K562 (cell line): ENCODE measurements at regions of chr17 and their contacts with region 1.

Region 1: GRCh38 chr17:75205037-75205792 is at the start of gene NUP85:
- DNase-seq: peak; percentile 96 to 100 (median 98)
- ATAC-seq: peak; percentile 87
- H3K4me3 ChIP-seq: peak within 1 kb of the TSS; percentile 67
- H3K27ac ChIP-seq: peak within 1 kb of the TSS; percentile 99
- H3K4me1 ChIP-seq: peaks cover 0 to 12% of the 10 kb centered on the region in 2 experiments; a peak in 3 of 5 replicates
- H3K27me3 ChIP-seq: no peaks in the 10 kb centered on the region
- CTCF ChIP-seq: no peak
- EP300 ChIP-seq: no peak; the same call in 1 of the 2 replicates
- POLR2A ChIP-seq: peak; percentile 94
- RAD21 ChIP-seq: peak in 1 of 2 experiments; percentile 21; a peak in 3 of 4 replicates
- polyA plus RNA-seq, gene NUP85: 156 to 177 TPM

Region 2: GRCh38 chr17:75131280-75132017 is 73.8 kb before region 1 on chr17 and contains the start of gene NT5C:
- CTCF ChIA-PET with region 1: interaction called, 7 read pairs
- POLR2A ChIA-PET with region 1: interaction called, 4 read pairs
- in situ Hi-C with region 1: no loop called
- intact Hi-C with region 1: loop called (anchors 1 kb)
- DNase-seq: peak; percentile 86 to 92 (median 88)
- ATAC-seq: peak; percentile 90
- H3K4me3 ChIP-seq: peak within 1 kb of the TSS; percentile 90
- H3K27ac ChIP-seq: peak within 1 kb of the TSS; percentile 90
- H3K4me1 ChIP-seq: peaks cover 12 to 36% of the 10 kb centered on the region in 2 experiments; a peak in 4 of 5 replicates
- H3K27me3 ChIP-seq: no peaks in the 10 kb centered on the region
- CTCF ChIP-seq: peak; percentile 75 to 86 (median 77)
- EP300 ChIP-seq: no peak
- POLR2A ChIP-seq: peak; percentile 83
- RAD21 ChIP-seq: peak; percentile 70 to 72
- polyA plus RNA-seq, gene NT5C: 2.9 to 5.0 TPM

Region 3: GRCh38 chr17:75173526-75173925 is 31.7 kb before region 1 on chr17:
- CTCF ChIA-PET with region 1: interaction called, 6 read pairs
- POLR2A ChIA-PET with region 1: interaction called, 7 read pairs
- in situ Hi-C with region 1: no loop called
- intact Hi-C with region 1: loop called (anchors 1 kb)
- DNase-seq: no peak
- ATAC-seq: no peak
- H3K4me3 ChIP-seq: no peak overlapping the region
- H3K27ac ChIP-seq: no peak overlapping the region
- H3K4me1 ChIP-seq: no peaks in the 10 kb centered on the region; a peak in 1 of 5 replicates
- H3K27me3 ChIP-seq: no peaks in the 10 kb centered on the region
- CTCF ChIP-seq: no peak
- EP300 ChIP-seq: no peak
- POLR2A ChIP-seq: no peak
- RAD21 ChIP-seq: no peak

Region 4: DNA sequence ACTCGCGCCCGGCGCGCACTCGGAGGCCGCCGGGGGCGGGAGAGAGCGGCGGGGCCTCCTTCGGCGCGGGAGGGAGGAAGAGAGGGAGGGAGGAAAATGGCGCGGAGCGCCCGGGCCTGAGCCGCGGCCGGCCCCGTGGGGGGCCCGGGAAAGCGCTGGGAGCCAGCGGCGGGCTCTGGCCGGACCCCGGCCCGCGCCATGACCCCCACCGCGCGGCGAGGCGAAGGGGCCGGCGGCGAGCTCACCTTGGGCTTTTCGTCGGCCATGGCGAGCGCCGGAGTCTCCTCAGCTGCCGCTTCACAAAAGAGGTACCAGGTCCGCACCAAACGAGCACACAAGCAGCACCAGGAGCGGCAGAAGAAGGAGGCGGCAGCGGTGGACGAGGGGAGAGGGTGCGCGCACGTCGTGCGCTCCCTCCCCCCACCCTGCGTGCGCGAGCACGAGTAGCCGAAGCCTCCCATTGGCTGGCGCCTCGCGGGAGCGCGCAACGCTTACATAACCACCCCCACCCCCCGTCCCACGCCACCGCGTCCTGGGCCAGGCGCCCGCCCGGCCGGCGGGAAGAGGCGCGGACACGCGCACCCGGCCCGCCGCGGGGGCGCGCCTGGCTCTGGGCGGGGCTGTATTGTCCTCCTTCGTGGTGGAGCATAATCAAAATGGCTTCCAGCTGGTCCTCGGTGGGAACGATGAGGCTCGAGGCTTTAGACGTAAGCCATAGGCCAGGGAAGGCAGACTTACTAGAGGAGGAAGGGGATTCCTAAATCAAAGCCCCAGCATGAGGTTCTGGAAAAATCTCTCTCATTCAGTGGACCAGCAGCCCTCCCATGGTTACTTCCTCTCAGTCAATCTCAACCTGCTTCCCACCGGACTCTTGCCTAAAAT is 22.4 kb before region 1 on chr17 and contains the start of gene SUMO2:
- CTCF ChIA-PET with region 1: no interaction called
- POLR2A ChIA-PET with region 1: interaction called, 10 read pairs
- in situ Hi-C with region 1: no loop called
- intact Hi-C with region 1: no loop called
- DNase-seq: peak; percentile 98 to 99 (median 99)
- ATAC-seq: peak; percentile 92
- H3K4me3 ChIP-seq: peak within 1 kb of the TSS; percentile 100
- H3K27ac ChIP-seq: peak within 1 kb of the TSS; percentile 100
- H3K4me1 ChIP-seq: peaks cover 18 to 26% of the 10 kb centered on the region in 2 experiments; a peak in 4 of 5 replicates
- H3K27me3 ChIP-seq: no peaks in the 10 kb centered on the region
- CTCF ChIP-seq: peak; percentile 34 to 38 (median 35); a peak in 2 of 6 replicates
- EP300 ChIP-seq: no peak
- POLR2A ChIP-seq: peak; percentile 82
- RAD21 ChIP-seq: no peak; a peak in 1 of 4 replicates
- polyA plus RNA-seq, gene SUMO2: 570 to 733 TPM

Region 5: DNA sequence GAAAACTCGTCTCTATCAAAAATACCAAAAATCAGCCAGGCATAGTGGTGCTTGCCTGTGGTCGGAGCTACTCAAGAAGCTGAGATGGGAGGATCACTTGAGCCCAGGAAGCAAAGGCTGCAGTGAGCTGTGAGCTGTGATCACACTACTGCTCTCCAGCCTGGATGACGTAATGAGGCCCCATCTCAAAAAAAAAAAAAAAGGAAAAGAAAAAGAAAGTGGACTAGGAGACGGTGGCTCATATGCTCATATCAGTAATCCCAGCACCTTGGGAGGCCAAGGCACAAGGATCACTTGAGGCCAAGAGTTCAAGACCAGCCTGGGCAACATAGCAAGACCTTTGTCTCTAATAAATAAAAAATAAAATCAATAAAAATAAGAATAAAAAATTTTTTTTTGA is 13.6 kb before region 1 on chr17:
- CTCF ChIA-PET with region 1: interaction called, 3 read pairs
- POLR2A ChIA-PET with region 1: interaction called, 27 read pairs
- in situ Hi-C with region 1: no loop called
- intact Hi-C with region 1: no loop called
- DNase-seq: peak in 2 of 4 experiments; percentile 16 to 60
- ATAC-seq: peak; percentile 76
- H3K4me3 ChIP-seq: no peak overlapping the region
- H3K27ac ChIP-seq: 0 out of 3 replicates have a peak overlapping the region, but pooled peaks have one; percentile 3
- H3K4me1 ChIP-seq: peaks cover 7 to 11% of the 10 kb centered on the region in 2 experiments; a peak in 2 of 5 replicates
- H3K27me3 ChIP-seq: no peaks in the 10 kb centered on the region
- CTCF ChIP-seq: no peak
- EP300 ChIP-seq: no peak
- POLR2A ChIP-seq: no peak
- RAD21 ChIP-seq: no peak

Region 6: GRCh38 chr17:75219815-75220214 is 14.6 kb after region 1 on chr17:
- CTCF ChIA-PET with region 1: no interaction called
- POLR2A ChIA-PET with region 1: interaction called, 30 read pairs
- in situ Hi-C with region 1: no loop called
- intact Hi-C with region 1: no loop called
- DNase-seq: peak in 3 of 4 experiments; percentile 11 to 20 (median 20)
- ATAC-seq: peak; percentile 54
- H3K4me3 ChIP-seq: no peak overlapping the region
- H3K27ac ChIP-seq: no peak overlapping the region
- H3K4me1 ChIP-seq: no peaks in the 10 kb centered on the region
- H3K27me3 ChIP-seq: no peaks in the 10 kb centered on the region
- CTCF ChIP-seq: no peak
- EP300 ChIP-seq: no peak
- POLR2A ChIP-seq: 0 out of 2 replicates have a peak, but pooled peaks have one; percentile 21
- RAD21 ChIP-seq: no peak